Activated CD4-positive, alpha-beta memory T cell treated with anti-CD3 and anti-CD28 coated beads for 36 hours (primary cell): ENCODE measurements at regions of chr19 and their contacts with region 1.

Region 1: DNA sequence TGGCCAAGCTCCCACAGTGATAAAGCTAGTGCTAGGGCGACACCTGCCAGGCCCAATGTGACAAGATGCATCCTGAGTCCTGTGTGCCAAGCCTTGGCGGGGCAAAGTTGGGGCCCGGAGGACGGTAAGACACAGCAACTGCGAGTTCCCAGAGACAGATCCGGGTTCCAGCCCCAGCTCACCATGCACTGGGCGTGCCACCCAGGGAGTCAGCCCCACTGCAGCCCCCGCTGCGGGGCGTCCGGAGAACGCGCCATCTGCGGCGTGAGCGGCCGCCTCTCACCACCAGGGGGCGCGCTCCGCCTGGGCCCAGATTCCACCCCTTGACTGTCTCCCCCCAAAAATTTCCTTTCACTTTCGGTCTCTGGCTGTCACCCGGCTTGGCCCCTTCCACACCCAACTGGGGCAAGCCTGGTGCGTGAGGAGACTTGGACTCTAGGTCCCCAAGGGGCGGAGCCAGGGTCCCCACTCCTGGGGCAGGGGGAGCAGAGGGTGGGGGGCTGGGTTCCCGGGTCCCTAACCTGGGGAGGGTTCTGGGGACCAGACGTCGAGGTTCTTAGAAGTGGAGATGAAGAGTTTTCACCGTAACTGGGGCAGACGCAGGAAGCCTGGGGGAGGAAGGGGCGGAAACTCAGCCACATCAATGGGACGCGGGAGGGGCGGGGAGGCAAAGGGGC is at the start of gene FLT3LG:
- DNase-seq: peak; percentile 93
- H3K4me3 Mint-ChIP-seq: peak within 1 kb of the TSS; percentile 88
- H3K27ac Mint-ChIP-seq: peak within 1 kb of the TSS; percentile 92
- H3K4me1 Mint-ChIP-seq: peaks cover 53% of the 10 kb centered on the region
- H3K27me3 Mint-ChIP-seq: no peaks in the 10 kb centered on the region
- total RNA-seq, gene FLT3LG: 50.1 to 51.0 TPM

Region 2: GRCh38 chr19:49188626-49189200 is 285.3 kb before region 1 on chr19:
- CTCF ChIA-PET with region 1: no interaction called
- POLR2A ChIA-PET with region 1: no interaction called
- intact Hi-C with region 1: no loop called
- DNase-seq: no peak
- H3K4me3 Mint-ChIP-seq: no peak overlapping the region
- H3K27ac Mint-ChIP-seq: no peak overlapping the region
- H3K4me1 Mint-ChIP-seq: peaks cover 9% of the 10 kb centered on the region
- H3K27me3 Mint-ChIP-seq: no peaks in the 10 kb centered on the region

Region 3: DNA sequence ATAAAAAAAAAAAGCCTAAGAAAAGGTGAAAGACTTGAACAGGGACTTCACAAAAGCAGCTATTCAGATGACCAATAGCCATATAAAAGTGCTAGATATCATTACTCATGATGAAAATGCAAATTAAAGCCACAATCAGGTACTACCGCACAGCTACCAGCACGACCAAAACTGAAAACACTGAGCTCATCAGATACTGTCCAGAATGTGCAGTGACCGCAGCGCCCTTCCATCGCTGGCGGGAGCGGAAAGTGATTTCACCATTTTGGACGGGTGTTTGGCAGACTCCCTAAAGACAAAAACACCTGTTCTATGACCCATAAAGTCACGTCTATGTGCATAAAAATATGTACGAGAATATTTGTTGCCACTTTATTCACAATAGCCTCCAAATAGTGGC is 209.7 kb before region 1 on chr19:
- CTCF ChIA-PET with region 1: no interaction called
- POLR2A ChIA-PET with region 1: no interaction called
- intact Hi-C with region 1: loop called (anchors 10 kb)
- DNase-seq: no peak
- H3K4me3 Mint-ChIP-seq: no peak overlapping the region
- H3K27ac Mint-ChIP-seq: no peak overlapping the region
- H3K4me1 Mint-ChIP-seq: no peaks in the 10 kb centered on the region
- H3K27me3 Mint-ChIP-seq: peaks cover 9% of the 10 kb centered on the region

Region 4: DNA sequence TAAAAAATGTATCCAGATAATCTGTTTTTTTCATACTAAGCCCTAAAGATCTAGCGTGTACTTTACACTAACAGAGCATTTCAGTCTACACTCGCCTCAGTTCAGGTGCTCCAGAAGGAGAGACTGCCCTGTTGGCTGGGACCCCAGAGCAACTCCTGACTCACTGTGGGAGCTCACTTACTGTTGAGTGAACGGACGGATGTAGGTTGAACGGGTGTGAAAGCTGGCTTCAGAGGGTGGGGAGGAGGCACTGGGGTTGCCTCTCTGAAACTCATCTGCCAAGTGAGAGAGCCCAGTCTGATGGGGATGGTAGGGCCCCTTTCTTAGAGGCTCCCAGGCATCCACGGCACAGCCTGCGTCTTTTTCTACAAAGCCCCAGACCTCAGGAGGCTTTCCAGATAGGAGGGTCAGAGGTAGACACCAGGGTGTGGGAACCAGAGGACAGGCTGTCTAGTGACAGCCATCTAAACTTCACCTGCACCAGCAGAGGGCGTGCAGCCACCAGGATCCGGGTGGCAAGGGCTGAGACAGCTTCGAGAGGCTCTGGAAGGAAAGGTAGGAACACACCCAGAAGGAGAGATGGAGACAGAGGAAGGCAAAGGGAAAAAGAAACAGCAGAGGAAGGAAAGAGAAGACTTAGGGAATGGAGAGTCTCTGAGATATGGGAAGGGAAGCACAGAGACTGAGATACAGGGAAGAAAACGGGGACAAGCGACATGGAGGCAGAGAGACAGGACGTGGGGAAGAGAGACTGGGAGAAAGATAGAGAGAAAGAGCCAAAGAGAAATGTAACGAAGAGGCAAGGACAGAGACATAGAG is 82.2 kb before region 1 on chr19:
- CTCF ChIA-PET with region 1: interaction called, 40 read pairs
- POLR2A ChIA-PET with region 1: no interaction called
- intact Hi-C with region 1: loop called (anchors 1 kb)
- DNase-seq: peak; percentile 86
- H3K4me3 Mint-ChIP-seq: no peak overlapping the region
- H3K27ac Mint-ChIP-seq: peak overlapping the region; percentile 30
- H3K4me1 Mint-ChIP-seq: peaks cover 19% of the 10 kb centered on the region
- H3K27me3 Mint-ChIP-seq: peaks cover 2% of the 10 kb centered on the region

Region 5: GRCh38 chr19:49487277-49488045 is 13.5 kb after region 1 on chr19 and contains the start of gene RPL13A:
- CTCF ChIA-PET with region 1: interaction called, 12 read pairs
- POLR2A ChIA-PET with region 1: interaction called, 15 read pairs
- intact Hi-C with region 1: loop called (anchors 1 kb)
- DNase-seq: peak; percentile 100
- H3K4me3 Mint-ChIP-seq: peak within 1 kb of the TSS; percentile 94
- H3K27ac Mint-ChIP-seq: peak within 1 kb of the TSS; percentile 97
- H3K4me1 Mint-ChIP-seq: peaks cover 24% of the 10 kb centered on the region
- H3K27me3 Mint-ChIP-seq: peaks cover 3% of the 10 kb centered on the region
- total RNA-seq, gene RPL13A: 4,276 to 4,379 TPM

Region 6: DNA sequence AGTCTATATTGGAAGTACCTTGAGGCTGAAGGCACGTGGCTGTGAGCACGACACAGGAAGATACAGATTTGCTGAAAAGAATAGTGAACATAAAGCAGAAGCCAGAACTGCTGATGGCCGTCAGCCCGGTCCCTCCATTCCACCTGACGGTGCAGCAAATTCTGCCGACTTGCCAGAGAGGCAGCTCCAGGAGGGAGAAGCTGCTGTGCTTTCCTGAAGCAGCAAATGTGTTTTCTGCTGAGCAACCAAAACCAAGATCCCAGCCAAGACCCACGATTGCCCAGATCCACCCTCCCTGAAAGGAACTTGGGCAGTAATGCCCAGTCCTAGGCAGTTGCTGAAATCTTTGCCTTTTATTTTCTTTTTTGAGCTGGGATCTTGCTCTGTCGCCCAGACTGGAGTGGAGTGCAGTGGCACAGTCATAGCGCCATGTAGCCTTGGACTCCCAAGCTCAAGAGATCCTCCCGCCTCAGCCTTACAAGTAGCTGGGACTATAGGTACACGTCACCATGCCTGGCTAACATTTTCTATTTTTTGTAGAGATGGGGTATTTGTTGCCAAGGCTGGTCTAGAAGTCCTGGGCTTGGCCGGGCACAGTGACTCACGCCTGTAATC is 46.8 kb after region 1 on chr19:
- CTCF ChIA-PET with region 1: no interaction called
- POLR2A ChIA-PET with region 1: no interaction called
- intact Hi-C with region 1: no loop called
- DNase-seq: no peak
- H3K4me3 Mint-ChIP-seq: no peak overlapping the region
- H3K27ac Mint-ChIP-seq: no peak overlapping the region
- H3K4me1 Mint-ChIP-seq: peaks cover 1% of the 10 kb centered on the region
- H3K27me3 Mint-ChIP-seq: no peaks in the 10 kb centered on the region

Region 7: DNA sequence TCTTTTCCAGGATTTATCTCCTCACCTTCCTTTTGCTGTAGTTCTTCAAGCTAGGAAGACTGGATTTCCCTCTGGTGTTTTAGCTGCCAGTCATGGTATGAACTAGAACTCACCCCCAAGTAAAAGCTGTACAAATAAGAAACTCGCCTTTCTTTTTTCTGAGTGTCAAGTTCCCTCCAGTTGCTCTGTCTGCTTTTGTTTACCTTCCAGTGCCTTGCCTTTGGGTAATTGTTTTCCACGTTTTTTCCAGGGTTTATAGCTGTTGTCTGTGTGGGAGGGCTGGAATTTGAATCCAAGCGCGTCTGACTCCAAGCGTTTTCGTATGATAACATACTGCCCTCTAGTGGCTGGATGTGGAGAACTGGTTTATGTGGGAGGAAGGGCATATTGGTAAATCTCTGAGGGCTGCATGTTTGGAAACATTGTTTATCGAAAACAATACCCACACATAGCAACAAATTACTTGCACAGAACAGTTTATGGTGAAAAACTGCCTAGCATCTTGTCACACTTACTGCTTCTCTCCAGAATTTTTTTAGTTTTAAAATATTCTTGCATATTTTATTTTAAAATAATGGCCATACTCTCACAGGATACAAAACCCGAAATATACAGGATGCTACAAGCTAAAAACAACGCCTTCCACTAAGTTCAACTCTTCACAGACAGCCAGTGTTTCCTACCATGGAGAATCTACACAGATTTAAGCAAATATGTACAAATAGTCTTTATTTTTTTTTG is 73.0 kb after region 1 on chr19:
- CTCF ChIA-PET with region 1: interaction called, 10 read pairs
- POLR2A ChIA-PET with region 1: no interaction called
- intact Hi-C with region 1: no loop called
- DNase-seq: peak; percentile 68
- H3K4me3 Mint-ChIP-seq: peak overlapping the region; percentile 75
- H3K27ac Mint-ChIP-seq: peak overlapping the region; percentile 59
- H3K4me1 Mint-ChIP-seq: peaks cover 29% of the 10 kb centered on the region
- H3K27me3 Mint-ChIP-seq: no peaks in the 10 kb centered on the region